ENCODE measurements at regions of chr6 and their contacts with region 1.

Region 1: DNA sequence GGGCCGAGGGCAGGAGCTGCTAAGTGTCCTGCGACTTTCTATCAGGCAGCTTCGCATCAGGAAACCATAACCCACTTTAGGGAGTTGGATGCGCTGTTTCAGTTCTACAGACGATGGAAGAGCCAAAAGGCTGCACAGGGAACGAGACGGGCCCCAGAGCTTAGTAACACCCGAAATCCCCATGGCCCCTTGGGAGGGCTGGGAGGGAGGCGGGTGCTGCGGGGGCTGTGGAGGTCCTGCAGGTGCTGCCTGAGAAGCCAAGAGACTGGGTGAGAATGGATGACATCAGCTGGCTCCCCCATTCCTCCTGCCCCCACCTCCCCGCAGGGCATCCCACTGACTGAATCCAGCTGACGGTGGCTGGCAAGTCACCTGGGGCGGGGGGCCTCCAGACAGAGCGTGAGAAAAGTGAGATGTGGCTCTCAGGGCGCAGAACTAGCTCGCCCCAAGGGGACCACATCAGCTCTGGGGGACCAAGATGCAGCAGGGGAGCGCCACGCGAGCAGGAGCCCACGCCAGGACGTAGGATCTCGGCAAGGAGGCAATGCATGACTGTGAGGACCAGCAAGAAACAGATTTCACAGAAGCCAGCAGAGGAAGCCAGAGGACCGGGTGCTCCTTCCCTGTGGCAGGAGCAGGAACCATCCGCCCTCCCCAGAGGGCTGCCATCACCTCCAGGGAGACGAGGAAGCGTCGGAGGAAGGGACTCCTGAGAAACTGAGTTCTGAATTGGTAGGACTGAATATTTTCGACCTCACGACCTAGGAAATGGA is 36.8 kb downstream of the PNLDC1 start:
- DNase-seq: peak in 1 of 7 donors; percentile 27
- H3K4me3 ChIP-seq: no peak overlapping the region
- H3K27ac ChIP-seq: peak overlapping the region in 1 of 5 donors; percentile 40
- H3K4me1 ChIP-seq: no peaks in the 10 kb centered on the region
- H3K27me3 ChIP-seq: no peaks in the 10 kb centered on the region
- CTCF ChIP-seq: no peak
- POLR2A ChIP-seq: no peak

Region 2: DNA sequence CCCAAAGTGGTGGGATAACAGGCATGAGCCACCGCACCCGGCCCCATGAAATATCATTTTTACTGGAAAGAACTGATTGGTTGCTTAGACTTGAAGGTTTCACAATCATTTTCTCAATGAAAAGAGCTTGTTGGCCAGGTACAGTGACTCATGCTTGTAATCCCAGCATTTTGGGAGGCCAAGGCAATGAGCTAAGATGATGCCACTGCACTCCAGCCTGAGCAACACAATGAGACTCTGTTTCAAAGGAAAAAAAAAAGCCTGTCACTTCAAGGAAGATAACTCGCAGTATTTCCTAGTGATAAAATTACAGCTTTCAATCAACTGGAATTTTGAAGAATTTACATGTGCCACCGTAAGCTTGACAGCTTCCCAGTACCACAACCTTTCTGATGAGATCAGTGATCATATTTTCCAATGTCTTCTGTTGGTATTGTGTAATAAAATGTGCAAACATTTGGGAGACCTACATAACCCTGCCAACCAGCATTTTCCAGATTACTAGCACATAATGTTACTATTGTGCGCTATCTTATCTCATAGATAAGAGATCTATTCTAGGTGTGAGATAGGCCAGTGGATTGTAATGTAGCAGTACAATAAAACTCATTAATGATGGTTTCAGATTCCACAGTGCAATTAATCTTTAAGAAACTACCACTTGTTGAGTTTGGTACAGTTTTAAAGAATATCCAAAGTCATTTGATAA is 29.6 kb before region 1 on chr6:
- intact Hi-C with region 1: loop called in 1 of 2 experiments (anchors 1 kb)
- DNase-seq: peak in 3 of 7 donors; percentile 12 to 34 (median 14)
- H3K4me3 ChIP-seq: no peak overlapping the region
- H3K27ac ChIP-seq: no peak overlapping the region
- H3K4me1 ChIP-seq: no peaks in the 10 kb centered on the region
- H3K27me3 ChIP-seq: no peaks in the 10 kb centered on the region
- CTCF ChIP-seq: no peak
- POLR2A ChIP-seq: no peak